Kidney (tissue), 22 donors: ENCODE measurements at regions of chr21 and their contacts with region 1.

Region 1: GRCh38 chr21:38985568-38986378 is 180.0 kb downstream of the ETS2 start:
- DNase-seq: peak; percentile 76 to 92 (median 89)
- H3K4me3 ChIP-seq: no peak overlapping the region
- H3K27ac ChIP-seq: peak overlapping the region; percentile 52 to 56
- H3K4me1 ChIP-seq: peaks cover 14 to 29% (median 17%) of the 10 kb centered on the region in 3 donors
- H3K27me3 ChIP-seq: no peaks in the 10 kb centered on the region
- CTCF ChIP-seq: no peak

Region 2: GRCh38 chr21:38825269-38825668 is 160.5 kb before region 1 on chr21:
- intact Hi-C with region 1: loop called (anchors 5 kb)
- DNase-seq: no peak
- H3K4me3 ChIP-seq: no peak overlapping the region
- H3K27ac ChIP-seq: no peak overlapping the region
- H3K4me1 ChIP-seq: peaks cover 0 to 14% (median 14%) of the 10 kb centered on the region in 3 donors
- H3K27me3 ChIP-seq: no peaks in the 10 kb centered on the region
- CTCF ChIP-seq: no peak

Region 3: DNA sequence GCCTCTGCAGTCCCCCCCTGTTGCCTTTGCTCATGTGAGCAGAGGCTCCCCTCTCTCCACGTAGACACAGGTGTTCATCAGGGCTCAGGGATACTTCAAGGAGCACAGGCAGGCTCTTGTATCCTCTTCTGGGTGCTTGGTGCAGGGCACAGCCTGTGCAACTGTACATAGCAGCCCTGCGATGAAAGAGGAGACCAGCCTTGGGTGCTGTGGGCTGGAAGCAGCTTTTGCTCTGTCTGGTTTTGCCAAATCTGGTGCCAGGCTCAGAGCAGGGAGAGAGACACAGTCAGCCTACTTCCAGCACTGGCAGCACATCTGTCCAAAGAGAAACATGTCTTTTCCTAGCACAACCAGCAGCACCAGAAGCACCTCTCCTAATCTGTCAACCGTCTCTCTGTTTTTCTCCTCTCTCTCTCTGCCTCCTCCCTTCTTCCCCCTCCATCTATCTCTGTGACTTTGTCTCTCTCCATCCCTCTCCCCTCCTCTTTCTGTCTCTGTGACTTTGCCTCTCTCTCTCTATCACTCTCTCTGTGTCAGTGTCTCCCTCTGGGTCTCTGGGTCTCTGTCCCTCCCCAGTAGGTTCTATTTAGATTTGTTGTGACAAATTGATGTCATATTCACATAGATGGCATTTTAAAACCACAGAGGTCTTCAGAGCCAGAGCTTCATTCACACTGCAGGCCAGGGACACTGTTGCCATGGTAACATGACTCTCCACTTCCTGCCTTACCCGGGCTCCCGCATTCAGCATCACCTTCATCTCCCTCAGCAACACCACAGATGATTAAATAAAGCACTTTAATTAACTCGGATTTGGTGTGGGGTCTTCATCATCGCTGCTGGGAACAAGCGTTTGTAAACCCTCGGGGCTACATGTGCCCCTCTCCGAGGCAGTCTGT is 47.7 kb before region 1 on chr21:
- intact Hi-C with region 1: loop called (anchors 10 kb)
- DNase-seq: peak in 2 of 5 donors; percentile 46 to 61
- H3K4me3 ChIP-seq: no peak overlapping the region
- H3K27ac ChIP-seq: no peak overlapping the region
- H3K4me1 ChIP-seq: no peaks in the 10 kb centered on the region
- H3K27me3 ChIP-seq: no peaks in the 10 kb centered on the region
- CTCF ChIP-seq: no peak

Region 4: DNA sequence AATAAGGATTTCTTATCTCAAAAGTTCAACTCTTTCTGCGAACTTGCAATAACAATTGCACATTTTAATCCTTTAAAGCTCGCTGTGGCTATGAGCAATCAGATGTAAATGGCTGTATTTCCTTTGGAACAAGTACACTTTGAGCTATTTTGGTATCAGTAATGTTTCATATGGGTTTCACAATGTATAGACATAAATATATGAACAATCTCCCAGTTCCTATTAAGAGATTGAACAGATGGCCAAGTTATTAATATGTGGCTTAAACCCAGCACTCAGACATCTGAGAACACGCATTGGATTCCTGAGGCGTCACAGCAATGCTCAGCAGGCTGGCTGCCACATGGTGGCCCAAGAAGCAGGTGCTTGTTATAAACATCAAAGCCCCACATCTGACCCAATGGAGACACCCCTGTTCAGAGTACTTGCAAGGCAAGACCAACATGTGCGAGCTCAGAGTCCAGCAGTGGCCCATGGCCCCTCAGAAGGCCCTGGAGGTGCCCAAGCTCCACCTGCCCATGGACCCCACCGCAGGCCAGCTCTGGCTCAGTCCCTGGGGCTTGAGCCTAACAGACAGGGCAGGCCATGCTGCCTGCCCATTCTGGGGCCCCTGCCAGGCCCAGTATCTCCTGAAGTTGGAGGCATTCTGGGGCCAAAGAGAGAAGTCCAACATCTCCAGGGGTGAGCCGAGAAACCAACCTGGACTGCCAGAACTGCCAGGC is 173.7 kb after region 1 on chr21:
- intact Hi-C with region 1: no loop called
- DNase-seq: no peak
- H3K4me3 ChIP-seq: no peak overlapping the region
- H3K27ac ChIP-seq: no peak overlapping the region
- H3K4me1 ChIP-seq: no peaks in the 10 kb centered on the region
- H3K27me3 ChIP-seq: no peaks in the 10 kb centered on the region
- CTCF ChIP-seq: no peak